PC-9 (cell line): ENCODE measurements at regions of chr3 and their contacts with region 1.

Region 1: DNA sequence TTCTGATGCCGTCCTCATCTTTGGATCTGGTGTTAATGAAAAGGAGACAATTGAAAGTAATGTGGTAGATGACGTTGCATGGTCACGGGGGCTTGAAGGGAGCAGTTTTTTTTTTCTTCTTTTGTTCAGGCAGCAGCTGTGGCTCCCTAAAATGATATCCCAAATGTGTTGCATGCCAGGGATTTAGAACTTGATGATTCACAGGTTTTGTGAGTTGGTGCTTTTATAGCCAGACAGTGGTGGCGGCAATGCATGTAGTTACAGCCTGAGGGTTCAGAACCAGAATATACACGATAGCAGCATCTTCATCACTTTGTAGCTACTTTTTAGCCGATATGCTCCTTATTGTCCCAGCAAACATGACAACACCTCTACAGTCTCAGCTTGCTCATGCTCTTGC is 133.4 kb downstream of the CHST2 start:
- DNase-seq: no peak
- H3K4me3 ChIP-seq: no peak overlapping the region
- H3K27ac ChIP-seq: no peak overlapping the region
- H3K4me1 ChIP-seq: no peaks in the 10 kb centered on the region
- H3K27me3 ChIP-seq: no peaks in the 10 kb centered on the region; the same call in 1 of the 2 replicates
- CTCF ChIP-seq: no peak

Region 2: GRCh38 chr3:141992512-141992911 is 1260.4 kb before region 1 on chr3:
- CTCF ChIA-PET with region 1: interaction called, 10 read pairs
- POLR2A ChIA-PET with region 1: no interaction called
- intact Hi-C with region 1: no loop called
- DNase-seq: no peak
- H3K4me3 ChIP-seq: no peak overlapping the region
- H3K27ac ChIP-seq: no peak overlapping the region
- H3K4me1 ChIP-seq: no peaks in the 10 kb centered on the region
- H3K27me3 ChIP-seq: no peaks in the 10 kb centered on the region
- CTCF ChIP-seq: no peak

Region 3: GRCh38 chr3:142940483-142940882 is 312.4 kb before region 1 on chr3:
- CTCF ChIA-PET with region 1: no interaction called
- POLR2A ChIA-PET with region 1: no interaction called
- intact Hi-C with region 1: no loop called
- DNase-seq: no peak
- H3K4me3 ChIP-seq: no peak overlapping the region
- H3K27ac ChIP-seq: no peak overlapping the region
- H3K4me1 ChIP-seq: no peaks in the 10 kb centered on the region
- H3K27me3 ChIP-seq: no peaks in the 10 kb centered on the region
- CTCF ChIP-seq: no peak

Region 4: DNA sequence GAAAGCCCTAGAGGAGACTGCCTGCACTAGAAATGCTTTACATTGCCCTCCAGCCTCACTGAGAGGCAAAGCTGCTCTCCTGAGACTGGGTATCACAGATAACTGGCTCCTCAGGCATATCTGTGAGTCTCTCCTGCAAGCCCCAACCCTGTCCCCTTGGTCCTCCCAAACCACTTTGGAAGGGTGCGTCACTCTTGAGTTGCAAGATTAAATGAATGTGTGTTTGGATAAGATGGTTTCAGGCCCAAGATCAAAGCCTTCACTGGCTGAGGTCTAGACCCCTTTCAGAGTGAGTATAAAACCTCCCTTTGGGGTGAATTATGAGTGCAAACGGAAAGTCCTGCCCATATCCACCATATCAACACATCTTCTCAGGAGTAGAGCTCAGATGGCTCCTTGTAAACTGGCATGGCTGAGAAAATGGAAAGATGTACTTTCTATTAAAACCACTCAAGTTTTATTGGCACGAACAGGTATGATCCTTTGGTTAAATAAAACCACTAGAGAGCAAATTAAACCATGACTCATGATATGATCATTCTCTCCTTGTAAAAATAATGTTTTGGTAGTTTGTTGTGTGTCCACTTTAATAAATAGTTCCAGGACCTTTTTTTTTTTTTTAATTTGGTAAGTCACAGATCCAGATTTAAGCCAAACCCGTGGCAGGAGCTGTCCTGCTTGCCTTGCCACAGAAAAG is 30.6 kb after region 1 on chr3:
- CTCF ChIA-PET with region 1: no interaction called
- POLR2A ChIA-PET with region 1: no interaction called
- intact Hi-C with region 1: no loop called
- DNase-seq: no peak
- H3K4me3 ChIP-seq: no peak overlapping the region
- H3K27ac ChIP-seq: no peak overlapping the region
- H3K4me1 ChIP-seq: no peaks in the 10 kb centered on the region
- H3K27me3 ChIP-seq: no peaks in the 10 kb centered on the region
- CTCF ChIP-seq: no peak